AG04450 (cell line): ENCODE measurements at regions of chr6 and their contacts with region 1.

Region 1: GRCh38 chr6:150079604-150080003 is 10.7 kb upstream of the ULBP3 start:
- DNase-seq: no peak
- H3K4me3 ChIP-seq: no peak overlapping the region
- H3K27ac ChIP-seq: no peak overlapping the region
- H3K27me3 ChIP-seq: peaks cover 14% of the 10 kb centered on the region
- CTCF ChIP-seq: no peak

Region 2: DNA sequence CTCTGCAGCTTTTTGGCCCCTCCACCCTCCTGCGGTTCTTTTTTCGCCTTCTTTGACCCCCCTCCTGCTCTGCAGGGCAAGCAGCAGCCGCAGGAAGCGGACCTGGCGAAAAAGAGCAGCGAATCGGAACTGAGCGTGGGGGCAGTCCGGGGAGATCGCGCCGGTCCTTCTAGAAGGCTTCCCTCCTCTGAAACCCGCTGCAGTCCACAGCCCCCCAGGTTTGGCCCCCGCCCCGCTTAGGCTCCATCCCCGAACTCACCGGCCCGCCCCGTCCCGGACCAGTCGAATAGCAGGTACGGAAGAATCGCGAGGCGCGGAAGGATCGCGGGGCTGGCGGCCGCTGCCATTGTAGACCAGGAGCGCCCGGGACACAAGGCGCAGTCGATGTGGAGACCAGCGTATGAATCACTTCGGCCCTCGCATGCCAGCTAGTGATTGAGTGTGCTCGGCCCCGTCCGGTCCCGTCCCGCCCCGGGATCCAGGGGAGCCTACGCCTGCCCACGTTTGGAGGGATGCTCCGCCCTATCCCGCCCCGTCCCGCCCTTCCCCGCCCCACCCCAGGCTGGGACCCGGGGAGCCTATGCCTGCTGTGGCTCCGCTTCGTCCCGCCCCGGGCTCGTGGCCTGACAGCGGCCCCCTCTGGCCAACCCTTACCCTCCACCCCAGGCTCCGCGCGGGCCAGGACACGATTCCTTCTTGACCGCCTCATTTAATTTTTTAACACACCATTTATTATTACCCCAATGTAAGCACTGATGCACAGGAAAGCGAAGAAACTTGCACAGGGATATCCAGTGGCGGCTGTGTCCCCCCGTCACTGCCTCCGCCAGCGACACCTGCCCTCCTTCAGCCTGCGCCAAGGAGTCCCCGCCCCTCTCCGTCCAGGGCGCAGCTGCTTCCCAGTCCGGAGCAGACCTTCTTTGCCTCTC is 10.6 kb before region 1 on chr6 and contains the start of gene ULBP3:
- CTCF ChIA-PET with region 1: interaction called, 39 read pairs
- POLR2A ChIA-PET with region 1: no interaction called
- DNase-seq: peak; percentile 81
- H3K4me3 ChIP-seq: peak within 1 kb of the TSS; percentile 76
- H3K27ac ChIP-seq: peak within 1 kb of the TSS; percentile 61
- H3K27me3 ChIP-seq: no peaks in the 10 kb centered on the region
- CTCF ChIP-seq: peak; percentile 63
- polyA plus RNA-seq, gene ULBP3: 13.1 and 16.0 TPM in 2 replicates

Region 3: DNA sequence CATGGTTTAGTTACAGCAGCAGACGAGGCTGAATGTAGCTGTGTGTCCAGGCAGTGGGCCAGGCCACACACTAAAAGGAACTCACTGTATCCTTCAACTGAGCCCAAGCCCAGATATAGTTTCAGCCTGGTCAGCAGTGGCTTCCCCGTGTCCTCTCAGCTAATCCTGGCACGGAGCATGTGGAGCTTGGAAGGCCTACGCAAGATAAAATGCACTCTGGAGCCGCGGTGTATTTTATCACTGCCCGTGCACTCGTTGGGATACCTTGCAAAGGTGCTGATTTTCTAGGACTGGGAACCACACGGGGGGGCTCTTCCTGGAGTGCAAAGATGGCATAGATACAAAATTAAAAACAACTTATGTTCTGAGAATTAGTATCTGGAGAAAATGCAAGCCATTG is 240.8 kb after region 1 on chr6:
- CTCF ChIA-PET with region 1: interaction called, 16 read pairs
- POLR2A ChIA-PET with region 1: no interaction called
- DNase-seq: no peak
- H3K4me3 ChIP-seq: no peak overlapping the region
- H3K27ac ChIP-seq: no peak overlapping the region
- H3K27me3 ChIP-seq: peaks cover 2% of the 10 kb centered on the region
- CTCF ChIP-seq: no peak

Region 4: DNA sequence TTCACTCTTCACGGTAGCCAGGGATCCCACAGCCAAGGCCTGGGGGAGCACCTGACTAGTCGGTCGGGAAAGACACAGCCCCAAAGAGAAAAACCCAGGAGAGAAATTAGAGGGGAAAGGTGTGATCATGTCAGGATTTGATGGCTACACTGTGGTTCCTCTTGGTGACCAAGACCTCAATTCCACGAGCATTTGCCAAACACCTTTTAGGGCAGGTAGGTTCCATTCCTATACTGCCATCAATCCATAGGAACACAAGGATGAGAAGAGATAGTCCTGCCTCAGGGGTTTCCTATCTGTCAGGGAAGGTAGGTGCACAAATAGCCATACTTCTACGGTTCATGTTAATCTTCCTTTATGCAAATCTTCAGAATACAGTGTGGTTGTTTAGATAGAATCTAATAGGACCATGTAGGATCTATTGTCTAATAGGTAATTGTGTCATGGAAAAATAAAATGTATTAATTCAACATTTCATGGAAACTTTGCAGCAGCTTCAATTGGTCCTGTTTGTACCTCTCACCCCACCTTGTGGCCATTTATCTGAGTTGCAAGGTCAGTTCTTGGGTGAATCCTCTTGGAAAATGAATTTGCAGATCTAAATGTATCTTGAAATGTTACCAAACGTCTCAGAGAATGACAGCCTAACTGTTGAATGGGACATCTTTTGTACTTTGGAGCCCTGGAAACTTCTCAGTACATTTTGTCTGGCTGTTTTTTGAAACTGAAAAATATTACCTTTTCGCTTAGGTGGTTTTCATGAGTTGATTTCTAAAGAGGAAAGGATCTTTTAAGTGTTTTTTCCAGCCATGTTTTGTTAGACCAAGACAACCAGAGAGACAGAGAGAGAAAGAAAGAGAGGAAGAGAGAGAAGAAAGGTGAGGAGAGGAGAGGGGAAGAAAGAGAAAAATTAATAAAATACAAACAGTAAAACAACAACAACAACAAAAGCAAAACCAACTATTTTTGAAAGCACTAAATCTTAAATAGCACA is 255.5 kb after region 1 on chr6:
- CTCF ChIA-PET with region 1: interaction called, 60 read pairs
- POLR2A ChIA-PET with region 1: no interaction called
- DNase-seq: peak; percentile 62
- H3K4me3 ChIP-seq: no peak overlapping the region
- H3K27ac ChIP-seq: no peak overlapping the region
- H3K27me3 ChIP-seq: peaks cover 2% of the 10 kb centered on the region
- CTCF ChIP-seq: peak; percentile 89

Region 5: GRCh38 chr6:150343434-150343833 is 263.8 kb after region 1 on chr6:
- CTCF ChIA-PET with region 1: interaction called, 11 read pairs
- POLR2A ChIA-PET with region 1: no interaction called
- DNase-seq: no peak
- H3K4me3 ChIP-seq: no peak overlapping the region
- H3K27ac ChIP-seq: no peak overlapping the region
- H3K27me3 ChIP-seq: peaks cover 3% of the 10 kb centered on the region
- CTCF ChIP-seq: no peak